Gastrocnemius medialis (tissue), 4 donors: ENCODE measurements at regions of chr12 and their contacts with region 1.

Region 1: GRCh38 chr12:32061033-32061432 is 45.6 kb upstream of the BICD1 start:
- DNase-seq: no peak
- ATAC-seq: no peak
- H3K4me3 ChIP-seq: no peak overlapping the region
- H3K27ac ChIP-seq: no peak overlapping the region
- H3K4me1 ChIP-seq: no peaks in the 10 kb centered on the region
- H3K27me3 ChIP-seq: no peaks in the 10 kb centered on the region
- CTCF ChIP-seq: no peak
- POLR2A ChIP-seq: no peak

Region 2: DNA sequence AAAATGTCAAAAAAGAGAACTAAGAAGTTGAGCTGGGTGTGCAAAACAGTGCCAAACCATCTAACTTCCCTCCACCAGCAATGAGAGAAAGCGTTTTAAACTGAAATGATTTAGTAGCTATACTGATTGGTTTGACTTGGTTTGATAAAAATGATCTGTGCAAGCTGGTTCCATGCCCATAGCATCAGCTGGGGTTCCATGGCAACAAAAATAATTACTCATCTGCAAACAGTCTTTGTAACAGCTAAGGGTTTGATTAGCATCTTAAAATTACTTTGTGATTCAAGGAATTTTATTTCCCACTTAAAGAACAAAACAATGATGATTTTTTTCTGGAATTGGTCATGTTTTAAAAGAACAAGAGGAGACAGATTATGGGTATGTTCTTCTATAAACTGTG is 30.7 kb after region 1 on chr12:
- in situ Hi-C with region 1: no loop called
- intact Hi-C with region 1: no loop called
- DNase-seq: no peak
- ATAC-seq: no peak
- H3K4me3 ChIP-seq: no peak overlapping the region
- H3K27ac ChIP-seq: no peak overlapping the region
- H3K4me1 ChIP-seq: no peaks in the 10 kb centered on the region
- H3K27me3 ChIP-seq: no peaks in the 10 kb centered on the region
- CTCF ChIP-seq: no peak
- POLR2A ChIP-seq: no peak

Region 3: GRCh38 chr12:32302218-32303173 is 241.5 kb after region 1 on chr12:
- in situ Hi-C with region 1: loop called (anchors 10 kb)
- intact Hi-C with region 1: loop called (anchors 2 kb)
- DNase-seq: no peak
- ATAC-seq: no peak
- H3K4me3 ChIP-seq: no peak overlapping the region
- H3K27ac ChIP-seq: no peak overlapping the region
- H3K4me1 ChIP-seq: peaks cover 0 to 3% of the 10 kb centered on the region in 2 donors
- H3K27me3 ChIP-seq: no peaks in the 10 kb centered on the region
- CTCF ChIP-seq: no peak
- POLR2A ChIP-seq: no peak

Region 4: DNA sequence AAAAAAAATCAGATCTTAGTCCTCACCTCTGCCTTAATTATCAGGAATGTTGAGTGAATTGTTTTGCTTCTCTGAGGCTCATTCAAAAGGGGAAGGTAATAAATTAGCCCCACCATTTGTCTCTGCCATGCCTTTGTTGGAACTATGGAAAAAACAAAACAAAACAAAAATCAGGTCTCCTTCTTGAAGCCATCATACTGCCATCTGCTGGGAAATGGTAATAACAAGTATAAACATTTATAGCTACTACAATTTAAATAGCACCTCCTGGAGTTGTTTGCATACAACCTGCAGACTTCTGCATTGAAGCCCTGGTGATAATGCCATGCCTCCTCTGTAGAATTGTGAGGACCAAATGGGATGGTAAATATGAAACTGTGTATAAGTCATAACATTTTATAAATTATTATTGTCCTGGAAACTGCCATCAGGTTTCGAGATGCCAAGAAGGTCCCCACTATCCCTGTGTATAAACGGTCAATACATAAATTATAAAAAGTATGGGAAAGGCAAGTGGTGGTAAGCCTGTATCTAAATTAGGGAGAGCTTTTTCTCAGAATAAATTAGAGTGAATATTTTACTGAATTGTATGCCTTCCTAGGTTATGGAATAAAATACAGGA is 251.1 kb after region 1 on chr12:
- in situ Hi-C with region 1: loop called in 3 of 4 experiments (anchors 10 kb)
- intact Hi-C with region 1: loop called (anchors 2 kb)
- DNase-seq: no peak
- ATAC-seq: peak in 1 of 2 donors; percentile 39
- H3K4me3 ChIP-seq: no peak overlapping the region
- H3K27ac ChIP-seq: no peak overlapping the region
- H3K4me1 ChIP-seq: no peaks in the 10 kb centered on the region
- H3K27me3 ChIP-seq: no peaks in the 10 kb centered on the region
- CTCF ChIP-seq: peak; percentile 19 to 54 (median 30)
- POLR2A ChIP-seq: no peak

Region 5: DNA sequence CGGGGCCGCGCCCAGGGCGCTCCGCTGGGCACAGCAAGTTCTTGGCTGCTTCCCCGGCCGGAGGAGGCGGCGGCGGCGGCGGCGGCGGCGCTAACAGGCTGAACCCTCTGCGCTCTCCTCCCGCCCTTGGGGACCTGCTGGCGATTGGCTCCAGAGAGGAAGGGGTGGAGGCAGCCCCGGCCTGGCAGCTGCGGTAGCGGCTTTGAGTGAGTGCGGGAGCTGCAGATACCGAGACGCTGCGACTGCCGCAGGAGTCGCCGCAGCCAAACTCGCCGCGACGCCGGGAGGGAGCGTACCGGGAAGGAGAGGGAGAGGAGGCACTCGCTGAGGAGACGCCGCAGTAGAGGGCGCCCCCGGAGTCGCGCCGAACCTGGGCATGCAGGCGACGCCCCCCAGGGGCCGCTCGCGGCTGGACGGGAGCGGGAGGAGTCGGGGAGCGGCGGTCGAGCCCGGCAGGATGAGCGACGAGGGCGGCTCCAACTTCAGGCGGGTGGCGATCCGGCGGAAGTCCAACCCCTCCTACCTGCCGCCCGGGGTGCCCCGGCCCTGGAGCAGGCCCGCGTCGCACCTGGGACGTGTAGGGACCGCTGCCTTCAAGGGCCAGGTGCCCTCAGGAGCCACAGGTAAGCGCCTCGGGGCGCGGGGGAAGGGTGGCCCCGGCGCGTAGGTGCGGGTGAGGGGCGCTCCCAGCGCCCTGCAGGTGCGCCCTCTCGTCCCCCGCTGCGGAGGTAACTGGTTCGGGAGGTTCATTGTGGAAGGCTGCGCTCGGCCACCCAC is 338.5 kb after region 1 on chr12 and contains the start of gene FGD4:
- in situ Hi-C with region 1: no loop called
- intact Hi-C with region 1: no loop called
- DNase-seq: peak; percentile 87 to 91
- ATAC-seq: peak; percentile 93 to 94
- H3K4me3 ChIP-seq: peak within 1 kb of the TSS; percentile 65 to 95 (median 82)
- H3K27ac ChIP-seq: peak within 1 kb of the TSS; percentile 63 to 86 (median 86)
- H3K4me1 ChIP-seq: peaks cover 4 to 16% of the 10 kb centered on the region in 2 donors
- H3K27me3 ChIP-seq: no peaks in the 10 kb centered on the region
- CTCF ChIP-seq: peak in 4 of 5 experiments; percentile 19 to 54 (median 46)
- POLR2A ChIP-seq: peak; percentile 76 to 83
- total RNA-seq, gene FGD4: 18.8 to 60.3 (median 40.8) TPM